ENCODE measurements at regions of chr19 and their contacts with region 1.

Region 1: DNA sequence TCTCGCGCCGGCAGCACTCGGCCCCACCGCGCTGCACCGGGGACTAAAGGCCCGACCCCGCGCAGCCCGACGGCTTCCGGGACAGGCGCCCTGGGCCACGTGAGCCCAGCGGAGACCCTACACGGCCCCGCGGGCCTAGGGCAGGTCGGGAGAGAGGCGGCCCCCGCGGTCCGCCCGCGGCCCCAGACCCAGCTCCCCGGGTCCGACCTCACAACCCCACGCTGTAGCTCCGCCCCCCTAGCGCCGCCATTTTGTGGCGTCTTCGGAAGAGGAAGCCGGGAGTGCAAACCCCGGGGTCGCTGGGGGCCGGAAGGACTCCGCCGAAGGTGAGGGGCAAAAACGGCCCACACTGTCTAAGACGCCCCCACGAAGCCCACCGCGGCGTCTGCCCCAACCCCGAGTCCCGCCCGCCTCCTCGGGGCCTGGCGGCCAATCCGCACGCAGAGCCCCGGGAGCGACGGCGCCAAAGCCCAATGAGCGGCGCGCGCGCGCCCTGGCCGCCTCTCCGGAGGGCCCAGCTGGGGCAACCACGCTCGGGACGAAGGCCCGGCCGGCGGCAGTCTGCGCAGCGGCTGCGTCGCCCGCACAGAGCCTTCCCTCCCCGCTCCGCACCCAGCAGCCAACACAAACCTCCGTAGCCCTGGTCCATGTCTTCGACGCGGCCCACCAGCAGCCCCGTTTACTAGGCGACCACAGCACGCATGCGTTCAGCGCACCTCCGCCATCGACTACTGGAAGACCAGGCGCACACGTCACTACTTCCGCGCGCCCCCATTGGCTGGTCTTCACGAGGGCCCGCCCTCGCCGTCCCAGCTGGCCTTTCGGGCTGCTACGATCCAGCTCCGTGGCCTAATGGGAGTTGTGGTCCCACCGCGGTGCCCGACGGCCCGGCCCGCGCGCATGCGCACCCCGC is at the start of gene AKAP8:
- DNase-seq: peak; percentile 100
- ATAC-seq: peak; percentile 97
- total RNA-seq, gene AKAP8: 19.8 TPM

Region 2: GRCh38 chr19:15177269-15178116 is 201.8 kb before region 1 on chr19:
- intact Hi-C with region 1: loop called (anchors 10 kb)
- DNase-seq: peak; percentile 93
- ATAC-seq: peak; percentile 89

Region 3: DNA sequence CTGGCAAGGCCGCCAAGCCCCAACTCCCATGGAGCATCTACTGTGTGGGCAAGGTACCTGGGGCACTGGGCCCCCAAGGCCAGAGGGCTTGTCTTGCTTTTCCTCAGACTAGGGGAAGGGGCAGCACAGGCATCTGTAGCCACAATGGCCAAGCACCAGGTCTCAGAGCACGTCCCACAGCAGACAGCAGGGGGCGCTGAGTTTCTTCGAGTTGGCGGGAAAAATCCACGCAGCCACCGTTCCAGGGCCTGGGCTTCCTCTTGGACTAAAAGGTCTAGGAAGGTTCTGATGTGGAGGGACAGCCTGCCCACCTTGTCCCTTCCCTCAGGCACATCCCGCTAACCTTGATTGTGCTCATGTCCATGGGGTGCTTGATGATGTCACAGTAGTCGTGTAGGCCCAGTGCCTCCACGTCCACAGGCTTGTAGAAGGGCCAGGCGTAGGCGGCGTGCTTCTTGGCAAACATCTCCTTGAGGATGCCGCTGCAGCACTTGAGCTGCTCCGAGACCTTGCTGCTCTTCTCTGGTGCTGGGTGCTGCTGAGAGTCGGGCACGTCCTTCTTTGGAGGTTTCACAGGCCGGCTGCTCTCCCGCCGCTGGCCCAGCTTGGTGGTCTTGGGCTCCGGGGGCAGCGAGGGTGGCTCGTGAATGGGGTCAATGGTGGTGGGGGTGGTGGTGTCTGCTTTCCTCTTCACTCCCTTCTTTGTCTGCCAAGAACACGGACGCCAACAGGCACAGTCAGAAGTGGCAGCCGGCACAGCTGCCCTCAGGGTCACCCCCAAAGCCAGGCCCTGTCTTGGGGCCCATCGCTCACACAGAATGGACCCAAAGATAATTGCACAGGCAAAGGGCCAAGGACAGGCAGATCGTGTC is 115.0 kb before region 1 on chr19:
- intact Hi-C with region 1: loop called (anchors 2 kb)
- DNase-seq: no peak
- ATAC-seq: peak; percentile 33

Region 4: DNA sequence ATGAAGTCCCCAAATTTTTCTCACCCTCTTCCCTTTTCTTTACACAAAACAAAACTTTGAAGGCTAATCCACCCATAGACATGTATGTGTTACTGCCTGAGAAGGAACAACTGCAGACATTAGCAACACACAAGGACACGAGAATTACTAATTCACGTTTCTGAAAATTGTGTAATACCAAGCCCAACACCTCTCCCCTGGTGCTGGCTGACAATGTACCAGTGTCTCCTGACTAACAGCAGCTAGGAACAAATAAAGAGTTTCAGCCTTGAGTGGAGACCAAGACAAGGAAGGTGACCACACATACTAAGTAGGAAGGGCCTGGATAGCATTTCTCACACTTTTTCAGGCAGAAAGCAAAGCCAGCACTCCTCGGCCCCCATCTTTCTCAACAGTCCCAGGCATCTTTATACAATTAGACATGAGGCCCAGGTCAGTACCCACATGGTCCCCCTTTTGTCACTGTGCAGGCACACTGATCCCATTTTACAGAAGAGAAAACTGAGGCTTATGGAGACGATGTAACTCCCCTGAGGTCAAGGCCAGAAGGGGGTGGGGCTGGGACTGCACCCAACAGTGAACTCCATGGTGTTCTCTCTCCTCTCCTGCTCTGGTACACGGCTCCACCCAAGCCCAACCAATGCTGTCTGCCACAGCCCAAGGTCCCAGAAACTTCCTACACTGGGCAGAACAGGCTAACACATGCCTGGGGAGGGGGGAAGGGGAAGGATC is 55.7 kb before region 1 on chr19:
- intact Hi-C with region 1: loop called (anchors 5 kb)
- DNase-seq: no peak
- ATAC-seq: peak; percentile 62

Region 5: DNA sequence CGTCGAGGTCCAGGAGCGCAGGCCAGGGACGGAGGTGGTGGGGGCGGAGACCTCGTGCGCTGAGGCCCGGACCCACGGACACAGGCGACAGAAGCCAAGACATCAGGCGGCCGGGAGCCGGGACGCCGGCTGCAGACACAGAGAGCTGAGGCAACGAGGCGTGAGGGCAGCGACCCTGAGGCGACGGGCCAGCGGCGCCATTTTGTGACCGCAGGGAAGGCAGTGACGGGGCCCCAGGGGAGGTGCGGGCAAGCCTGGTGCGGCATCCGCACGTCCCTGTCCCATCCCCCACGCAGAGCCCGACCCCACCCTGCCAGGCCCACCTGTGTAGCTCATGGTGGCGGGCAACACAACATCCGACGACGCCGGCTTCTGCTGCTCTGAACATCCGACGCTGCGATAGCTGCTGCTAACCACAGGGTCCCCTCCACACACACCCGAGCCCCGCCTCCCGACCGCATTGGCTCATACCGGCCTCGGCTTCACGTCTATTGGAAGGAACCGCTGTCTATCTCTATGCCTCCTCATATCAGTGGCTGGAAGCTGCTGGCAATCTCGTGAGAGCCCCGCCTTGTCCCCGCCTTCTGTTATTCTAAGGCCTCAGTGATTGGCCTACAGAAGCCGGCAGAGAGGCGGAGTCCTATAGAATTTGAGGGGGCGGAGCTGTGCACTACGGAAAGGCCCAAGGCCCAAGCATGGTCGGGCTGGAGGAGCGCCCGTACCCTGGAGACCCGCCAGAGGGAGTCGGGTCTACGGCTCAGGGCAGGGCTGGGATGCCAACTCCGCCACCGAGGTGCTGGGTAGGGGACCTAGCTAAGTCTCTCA is 39.5 kb after region 1 on chr19 and contains the start of gene AKAP8L:
- intact Hi-C with region 1: loop called (anchors 5 kb)
- DNase-seq: peak; percentile 99
- ATAC-seq: peak; percentile 98
- total RNA-seq, gene AKAP8L: 76.7 TPM

Region 6: DNA sequence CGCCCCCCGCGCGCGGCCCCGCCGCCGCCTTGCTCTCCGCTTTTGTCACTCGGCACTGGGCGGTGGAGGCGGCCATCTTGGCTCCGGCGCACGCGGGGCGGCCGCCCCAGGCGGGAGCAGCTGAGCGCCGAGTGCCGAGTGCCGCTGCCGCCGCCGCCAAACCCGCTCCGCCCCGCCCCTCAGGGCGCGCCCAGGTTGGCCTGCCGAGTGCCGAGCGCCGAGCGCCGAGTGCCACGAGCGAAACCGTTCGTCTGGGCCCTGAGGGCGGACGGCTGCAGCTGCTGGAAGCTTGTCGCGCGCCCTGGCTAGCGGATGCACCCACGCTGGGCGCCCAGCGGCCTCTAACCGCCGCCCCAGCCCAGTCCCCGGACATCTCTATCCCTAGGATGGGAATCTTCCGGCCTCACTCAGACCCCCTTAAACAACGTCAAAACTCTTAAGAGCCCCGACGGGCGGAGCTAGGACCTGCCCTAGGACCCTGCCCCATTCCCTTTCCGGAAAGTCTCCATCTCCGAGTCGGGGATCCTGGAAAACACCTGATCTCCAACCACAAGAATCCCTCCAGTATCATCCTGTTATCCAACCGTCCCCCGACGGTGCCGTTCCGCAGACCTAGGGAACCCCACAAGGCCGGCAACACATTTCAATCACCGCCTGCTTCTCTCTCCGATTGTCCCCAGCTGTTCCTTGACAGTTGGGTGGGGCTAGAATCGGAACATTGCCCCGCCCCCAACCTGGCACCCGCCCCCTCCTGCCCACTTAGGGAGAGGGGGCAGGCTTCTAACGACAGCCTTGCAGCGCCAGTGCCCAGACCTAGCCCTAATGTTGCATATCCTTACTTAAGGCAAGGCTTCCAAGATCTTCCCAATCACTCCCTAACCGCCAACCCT is 53.5 kb after region 1 on chr19:
- intact Hi-C with region 1: loop called (anchors 5 kb)
- DNase-seq: peak; percentile 96
- ATAC-seq: peak; percentile 93

Region 7: GRCh38 chr19:15449620-15450527 is 70.5 kb after region 1 on chr19 and contains the start of gene WIZ:
- intact Hi-C with region 1: loop called (anchors 5 kb)
- DNase-seq: peak; percentile 94
- ATAC-seq: peak; percentile 10
- total RNA-seq, gene WIZ: 31.3 TPM

Measured in Right ventricle myocardium inferior (tissue), 1 donor.